Activated CD4-positive, alpha-beta T cell treated with anti-CD3 and anti-CD28 coated beads, Interleukin-2, amount 10 ng/mL, durations not matched to agents 24 days and 14 days (primary cell): ENCODE measurements at regions of chr13 and their contacts with region 1.

Region 1: DNA sequence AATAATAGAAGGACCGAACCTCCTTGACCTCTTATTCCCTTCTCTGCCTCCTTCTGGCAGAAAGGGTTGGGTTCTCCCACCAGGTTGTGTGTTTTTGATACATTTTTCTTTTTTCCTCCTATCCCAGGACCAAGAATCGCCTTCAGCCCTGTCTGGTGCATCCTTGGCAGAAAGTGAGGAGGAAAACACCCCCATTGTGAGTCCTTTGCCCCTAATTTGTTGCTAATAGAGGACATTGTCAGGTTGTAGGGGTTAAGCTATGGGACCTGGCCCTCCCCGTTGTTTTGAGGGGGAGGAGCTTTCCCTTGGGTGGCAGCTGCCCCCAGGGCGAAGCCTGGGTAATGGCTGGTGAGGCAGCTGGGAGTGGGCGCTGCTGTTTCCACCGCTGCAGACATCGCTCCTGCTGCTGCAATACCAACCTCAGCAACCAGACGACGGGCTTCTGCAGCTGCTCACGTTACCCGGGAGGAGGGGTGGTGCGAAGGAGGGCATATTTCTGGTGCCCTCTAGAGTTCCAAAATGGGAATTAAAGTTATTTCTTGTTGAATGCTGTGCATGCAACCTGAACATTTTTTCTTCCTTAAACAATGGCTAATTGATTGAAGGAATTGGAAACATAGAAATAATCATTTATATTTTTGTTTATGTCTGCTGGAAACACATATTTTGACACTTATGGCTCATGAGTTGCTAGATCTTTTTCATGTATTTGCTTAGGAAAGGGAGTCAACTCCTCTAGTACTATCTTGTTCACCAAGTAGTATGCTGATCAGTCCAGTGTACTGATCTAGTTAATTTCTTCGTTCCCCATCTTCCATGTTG is 1.5 kb downstream of the ZMYM2 start:
- DNase-seq: peak; percentile 94
- H3K4me3 Mint-ChIP-seq: peak overlapping the region; percentile 97
- H3K27ac Mint-ChIP-seq: peak overlapping the region; percentile 97
- H3K4me1 Mint-ChIP-seq: peaks cover 25% of the 10 kb centered on the region
- H3K27me3 Mint-ChIP-seq: peaks cover 7% of the 10 kb centered on the region

Region 2: DNA sequence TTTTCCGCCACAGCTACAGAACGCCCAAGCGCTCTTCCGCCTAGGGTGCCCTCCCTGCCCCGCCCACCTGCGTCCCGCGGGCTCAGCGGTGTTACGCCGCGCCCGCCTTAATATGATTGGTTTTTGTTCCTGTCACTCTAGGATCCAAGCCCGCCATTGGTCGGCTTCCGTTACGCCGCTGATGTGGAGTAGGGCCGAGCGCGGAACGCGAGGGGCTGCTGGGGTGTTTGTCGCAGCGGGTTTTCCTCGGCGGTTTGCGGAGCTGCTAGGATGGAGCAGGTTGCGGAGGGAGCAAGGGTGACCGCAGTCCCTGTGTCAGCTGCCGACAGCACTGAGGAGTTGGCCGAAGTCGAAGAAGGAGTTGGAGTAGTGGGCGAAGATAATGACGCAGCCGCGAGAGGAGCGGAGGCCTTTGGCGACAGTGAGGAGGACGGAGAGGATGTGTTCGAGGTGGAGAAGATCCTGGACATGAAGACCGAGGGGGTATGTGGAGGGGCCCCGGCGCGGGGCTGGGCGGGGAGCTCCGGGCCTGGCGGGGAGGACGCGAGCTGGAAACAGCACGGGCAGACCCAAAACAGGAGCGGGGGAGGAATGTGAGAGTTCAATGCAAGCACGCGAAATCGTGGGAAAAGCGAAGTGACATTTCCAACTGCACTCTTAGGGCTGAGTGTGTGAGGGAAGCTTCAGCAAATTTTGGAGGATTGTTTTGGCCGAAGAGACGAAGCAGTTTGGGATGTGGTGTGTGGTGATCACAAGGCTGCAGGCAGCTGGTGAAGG is 326.4 kb before region 1 on chr13 and contains the start of gene MPHOSPH8:
- intact Hi-C with region 1: loop called (anchors 1 kb)
- DNase-seq: peak; percentile 98
- H3K4me3 Mint-ChIP-seq: peak within 1 kb of the TSS; percentile 100
- H3K27ac Mint-ChIP-seq: peak within 1 kb of the TSS; percentile 97
- H3K4me1 Mint-ChIP-seq: peaks cover 26% of the 10 kb centered on the region
- H3K27me3 Mint-ChIP-seq: peaks cover 4% of the 10 kb centered on the region
- total RNA-seq, gene MPHOSPH8: 40.3 and 41.1 TPM in 2 replicates

Region 3: DNA sequence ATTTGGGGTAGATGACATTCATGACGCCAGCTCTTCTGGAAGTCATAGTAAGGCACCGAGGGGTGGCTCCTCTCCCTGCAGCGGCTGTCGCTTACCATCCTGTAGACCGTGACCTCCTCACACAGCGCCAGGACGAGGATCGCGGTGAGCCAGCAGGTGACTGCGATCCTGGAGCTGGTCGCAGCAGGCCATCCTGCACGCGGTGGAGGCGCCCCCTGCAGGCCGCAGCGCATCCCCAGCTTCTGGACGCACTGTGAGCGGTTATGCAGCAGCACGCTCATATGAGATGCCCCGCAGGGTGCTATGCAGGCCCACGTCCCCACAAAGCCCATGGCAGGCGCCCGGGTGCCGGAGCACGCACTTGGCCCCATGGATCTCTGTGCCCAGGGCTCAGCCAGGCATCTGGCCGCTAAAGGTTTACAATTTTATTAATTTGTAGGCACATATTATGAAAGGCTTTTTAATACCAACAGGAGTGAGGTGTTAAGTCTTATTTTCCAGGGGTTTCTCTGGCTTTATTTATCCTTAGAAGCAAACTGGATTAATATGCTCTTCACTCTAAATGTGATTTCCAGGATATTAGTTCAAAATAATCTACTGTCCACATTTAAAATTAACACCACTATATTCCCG is 141.7 kb before region 1 on chr13:
- intact Hi-C with region 1: no loop called
- DNase-seq: peak; percentile 78
- H3K4me3 Mint-ChIP-seq: no peak overlapping the region
- H3K27ac Mint-ChIP-seq: no peak overlapping the region
- H3K4me1 Mint-ChIP-seq: no peaks in the 10 kb centered on the region
- H3K27me3 Mint-ChIP-seq: no peaks in the 10 kb centered on the region

Region 4: DNA sequence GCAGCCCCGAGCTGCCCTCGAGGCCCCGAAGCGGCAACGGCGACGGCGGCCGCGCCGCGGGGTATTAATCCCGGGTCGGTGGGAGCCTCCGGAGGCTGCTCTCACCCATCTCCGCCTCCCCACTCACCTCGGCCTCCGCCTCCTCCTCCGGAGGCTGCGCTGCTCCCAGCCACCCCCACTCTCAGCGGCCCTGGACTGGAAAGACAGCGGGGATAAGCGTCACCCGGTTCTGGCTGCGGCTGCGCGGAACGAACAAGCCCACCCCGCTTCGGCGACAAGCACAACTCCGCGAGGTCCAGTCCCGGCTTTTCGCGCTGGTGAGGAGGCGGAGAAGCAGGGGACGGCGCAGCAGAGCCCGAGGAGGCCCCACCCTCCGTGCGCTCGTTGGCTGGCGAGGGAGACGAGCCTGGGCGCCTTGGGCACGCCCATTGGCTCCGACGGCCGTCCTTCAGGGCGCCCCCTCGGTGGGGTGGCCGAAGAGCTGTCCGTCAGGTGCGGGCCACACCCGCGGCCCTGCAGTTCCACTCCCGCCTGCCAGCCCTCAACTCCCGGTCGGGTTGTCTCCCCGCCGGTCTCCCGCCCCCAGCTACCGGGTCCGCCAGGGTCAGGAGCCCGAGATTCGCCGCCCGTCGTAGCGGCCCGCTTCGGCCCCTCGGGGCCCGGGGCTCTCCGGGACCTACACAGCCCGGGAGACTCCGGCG is 96.6 kb before region 1 on chr13 and contains the start of gene ZMYM5:
- intact Hi-C with region 1: loop called (anchors 1 kb)
- DNase-seq: peak; percentile 99
- H3K4me3 Mint-ChIP-seq: peak within 1 kb of the TSS; percentile 98
- H3K27ac Mint-ChIP-seq: peak within 1 kb of the TSS; percentile 98
- H3K4me1 Mint-ChIP-seq: peaks cover 34% of the 10 kb centered on the region
- H3K27me3 Mint-ChIP-seq: no peaks in the 10 kb centered on the region
- total RNA-seq, gene ZMYM5: 12.9 and 13.4 TPM in 2 replicates

Region 5: DNA sequence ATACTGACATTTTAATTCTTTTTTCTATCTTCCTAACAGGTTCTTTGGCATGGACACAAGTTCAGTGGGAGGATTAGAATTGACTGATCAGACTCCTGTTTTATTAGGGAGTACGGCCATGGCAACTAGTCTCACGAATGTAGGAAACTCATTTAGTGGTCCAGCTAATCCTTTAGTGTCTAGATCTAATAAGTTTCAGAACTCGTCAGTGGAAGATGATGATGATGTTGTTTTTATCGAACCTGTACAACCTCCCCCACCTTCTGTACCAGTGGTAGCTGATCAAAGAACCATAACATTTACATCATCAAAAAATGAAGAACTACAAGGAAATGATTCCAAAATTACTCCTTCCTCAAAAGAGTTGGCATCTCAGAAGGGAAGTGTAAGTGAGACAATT is 33.0 kb after region 1 on chr13:
- intact Hi-C with region 1: no loop called
- DNase-seq: no peak
- H3K4me3 Mint-ChIP-seq: no peak overlapping the region
- H3K27ac Mint-ChIP-seq: no peak overlapping the region
- H3K4me1 Mint-ChIP-seq: peaks cover 14% of the 10 kb centered on the region
- H3K27me3 Mint-ChIP-seq: no peaks in the 10 kb centered on the region

Region 6: DNA sequence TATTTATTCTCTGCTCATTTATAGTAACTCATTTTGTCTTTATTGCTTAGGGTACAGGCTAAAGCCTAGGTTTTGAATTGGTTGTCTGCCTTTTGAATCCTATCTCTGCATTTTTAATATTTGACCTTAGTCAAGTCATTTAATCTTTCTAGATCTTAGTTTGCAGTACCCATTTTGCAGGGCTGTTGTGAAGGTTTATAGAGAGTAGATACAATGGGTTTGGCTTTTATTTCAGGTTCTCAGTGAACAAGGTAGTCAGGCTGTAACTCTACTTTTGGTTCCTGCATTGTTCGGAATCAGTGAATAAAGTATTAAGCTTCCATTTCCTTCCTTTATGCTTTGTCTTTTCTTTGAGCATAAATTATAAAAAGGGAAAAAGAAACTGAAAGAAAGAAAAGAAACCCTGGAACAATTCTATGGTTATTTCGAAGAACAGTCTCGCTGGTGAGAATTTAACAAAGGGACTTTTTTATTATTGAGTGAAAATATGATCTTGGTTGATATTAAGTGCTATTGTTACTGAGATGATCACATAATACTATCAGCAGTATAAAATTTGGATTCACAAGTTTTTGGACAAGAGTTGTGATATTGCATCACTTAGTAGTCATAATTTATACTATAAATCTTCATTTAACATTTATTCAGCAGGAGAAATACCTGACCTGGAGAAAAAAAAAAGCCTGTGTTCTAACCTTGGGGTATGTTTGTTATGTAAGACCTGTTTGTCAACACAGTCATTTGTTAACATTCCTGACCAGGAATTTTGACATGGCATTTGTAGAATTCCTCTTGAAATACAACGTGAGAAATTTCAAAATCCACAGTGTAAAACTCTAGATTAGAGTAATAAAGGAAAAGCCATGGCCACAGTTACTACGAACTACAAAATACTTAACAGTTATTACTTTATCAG is 89.8 kb after region 1 on chr13:
- intact Hi-C with region 1: no loop called
- DNase-seq: no peak
- H3K4me3 Mint-ChIP-seq: peak overlapping the region; percentile 70
- H3K27ac Mint-ChIP-seq: peak overlapping the region; percentile 65
- H3K4me1 Mint-ChIP-seq: peaks cover 17% of the 10 kb centered on the region
- H3K27me3 Mint-ChIP-seq: no peaks in the 10 kb centered on the region

Region 7: DNA sequence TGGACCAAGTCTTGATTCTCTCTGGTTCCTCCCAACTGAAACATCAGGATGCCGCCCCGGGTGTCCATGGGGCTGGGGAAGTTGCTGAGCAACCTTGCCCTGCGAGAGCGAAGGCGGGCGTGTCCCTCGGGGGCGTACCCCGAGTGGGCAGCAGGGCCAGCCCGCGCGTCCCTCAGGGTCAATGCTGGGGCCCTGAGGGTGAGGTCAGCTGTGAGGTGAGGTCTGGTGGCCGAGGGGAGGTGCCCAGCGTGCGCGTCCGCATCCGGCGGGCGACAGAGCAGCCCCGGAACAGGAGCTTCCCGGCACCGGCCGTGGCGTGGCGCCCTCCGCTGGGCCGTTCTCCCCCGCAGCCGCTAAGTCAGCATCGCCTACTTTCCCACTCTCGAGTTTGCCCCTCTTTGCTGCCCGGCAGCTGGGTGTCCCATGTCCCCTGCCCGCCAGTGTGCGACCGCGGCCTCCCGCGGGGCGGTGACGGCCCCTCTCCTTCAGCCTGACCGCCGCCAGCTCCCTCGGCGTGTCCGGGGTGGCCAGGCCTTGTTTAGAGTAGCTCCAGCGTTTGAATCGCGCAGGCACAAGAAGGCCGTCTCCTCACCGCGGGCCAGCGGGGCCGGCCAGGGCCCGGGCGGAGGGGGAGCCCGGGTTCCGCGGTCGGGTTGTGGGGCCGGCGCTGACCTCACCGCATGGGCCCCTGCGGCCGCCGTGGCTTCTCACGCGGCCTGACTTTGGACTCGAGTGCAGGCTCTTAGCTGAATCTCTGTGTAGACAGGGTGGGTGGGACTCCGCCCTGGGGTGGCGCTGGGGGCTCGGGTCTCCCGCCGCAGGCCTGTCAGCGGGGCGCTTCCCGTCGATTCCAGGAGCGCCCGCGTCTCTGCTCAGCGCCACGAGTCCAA is 167.8 kb after region 1 on chr13:
- intact Hi-C with region 1: loop called (anchors 5 kb)
- DNase-seq: peak; percentile 81
- H3K4me3 Mint-ChIP-seq: peak overlapping the region; percentile 60
- H3K27ac Mint-ChIP-seq: no peak overlapping the region
- H3K4me1 Mint-ChIP-seq: peaks cover 2% of the 10 kb centered on the region
- H3K27me3 Mint-ChIP-seq: peaks cover 35% of the 10 kb centered on the region

Region 8: DNA sequence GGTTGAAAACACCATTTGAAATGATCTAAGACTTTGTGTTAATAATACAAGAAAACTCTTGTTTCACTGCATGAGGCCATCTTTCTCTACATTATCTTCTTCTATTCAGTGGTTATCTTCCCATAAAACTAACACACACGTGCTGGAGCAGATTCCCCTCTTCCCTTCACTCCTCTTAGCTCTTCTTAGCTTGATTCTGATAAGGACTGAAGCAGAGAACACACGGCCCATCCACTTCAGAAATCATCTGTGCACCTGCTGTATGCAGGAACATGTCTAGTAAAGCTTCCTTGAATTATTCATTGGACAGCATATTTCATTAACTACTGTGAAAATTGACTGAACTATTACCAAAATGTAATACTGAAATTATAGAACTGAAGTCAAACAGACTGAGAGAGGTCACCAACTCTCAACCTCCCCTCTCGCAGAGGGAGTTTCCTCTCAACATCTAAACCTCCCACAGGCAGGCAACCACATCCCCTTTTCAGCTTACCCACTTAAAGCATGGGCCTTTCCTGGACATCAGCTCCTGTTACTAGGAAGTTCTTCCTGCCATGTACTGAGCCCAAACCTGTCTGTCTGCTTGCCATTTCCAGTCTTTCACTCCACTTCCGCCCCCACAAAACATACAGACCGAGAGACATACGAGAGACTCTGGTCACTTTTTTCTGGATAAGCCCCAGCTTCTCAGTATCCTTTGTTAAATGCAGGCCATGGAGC is 451.8 kb after region 1 on chr13:
- intact Hi-C with region 1: loop called (anchors 5 kb)
- DNase-seq: peak; percentile 85
- H3K4me3 Mint-ChIP-seq: peak overlapping the region; percentile 68
- H3K27ac Mint-ChIP-seq: peak overlapping the region; percentile 81
- H3K4me1 Mint-ChIP-seq: peaks cover 26% of the 10 kb centered on the region
- H3K27me3 Mint-ChIP-seq: no peaks in the 10 kb centered on the region